Left cardiac atrium (tissue), 4 donors: ENCODE measurements at regions of chrX and their contacts with region 1.

Region 1: DNA sequence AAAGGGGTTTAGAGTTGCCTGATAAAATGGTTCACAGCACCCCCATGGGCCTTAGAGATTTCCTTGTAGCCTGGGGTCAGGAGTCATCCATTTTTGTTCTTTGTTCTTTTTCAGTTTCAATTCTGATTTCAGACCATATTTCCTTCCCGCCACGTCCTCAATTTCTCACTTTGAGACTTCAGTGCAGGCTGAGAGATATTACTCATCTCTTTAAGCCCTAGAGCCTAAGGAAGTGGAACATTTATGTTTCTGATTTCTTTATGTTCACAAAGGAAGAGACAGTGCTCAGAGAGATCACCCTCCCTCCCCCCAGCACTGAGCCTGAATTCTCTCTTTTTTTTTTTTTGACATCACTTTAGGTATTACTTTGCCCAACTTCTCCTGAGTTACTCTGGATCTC is 56.3 kb downstream of the MSN start:
- DNase-seq: no peak
- ATAC-seq: peak; percentile 6 to 50

Region 2: DNA sequence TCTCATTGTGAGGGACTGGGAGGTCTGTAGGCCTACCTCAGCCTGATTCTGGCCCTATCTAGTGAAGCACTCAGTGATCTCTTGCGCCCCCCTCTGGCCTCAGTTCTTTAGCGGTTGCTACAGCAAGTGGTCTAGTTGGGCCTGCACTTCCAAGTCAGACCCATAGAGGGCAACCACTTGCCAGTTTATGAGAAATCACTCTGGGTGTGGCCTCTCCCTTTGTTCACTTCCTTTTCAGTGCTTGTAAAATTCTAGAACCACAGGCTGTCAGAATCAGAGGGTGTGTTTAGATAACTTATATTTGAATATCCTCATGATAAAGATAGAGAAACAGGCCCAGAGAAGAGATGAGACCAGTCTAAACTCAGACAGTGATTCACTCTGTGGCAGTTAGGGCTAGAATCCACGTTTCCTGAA is 128.2 kb before region 1 on chrX:
- intact Hi-C with region 1: loop called in 1 of 2 experiments (anchors 10 kb)
- DNase-seq: peak; percentile 98
- ATAC-seq: peak; percentile 90 to 94